ENCODE measurements at regions of chr19 and their contacts with region 1.

Region 1: DNA sequence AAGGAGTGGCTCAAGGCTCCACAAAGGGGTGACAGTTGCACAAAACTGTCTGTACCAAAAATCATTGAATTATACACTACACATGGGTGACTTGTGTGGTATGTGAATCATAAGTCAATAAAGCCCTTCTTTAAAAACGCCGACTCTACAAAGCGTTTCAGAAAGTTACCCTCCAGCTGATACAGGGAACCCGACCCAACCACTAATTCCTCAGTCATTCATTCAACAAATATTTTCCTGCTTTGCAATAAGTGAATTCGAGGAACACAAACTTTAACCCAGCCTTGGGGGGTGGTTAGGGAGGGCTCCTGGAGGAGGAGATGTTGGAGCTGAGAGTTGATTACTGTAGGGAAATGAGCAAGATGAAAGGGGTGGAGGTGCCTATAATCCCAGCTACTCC is 32.0 kb downstream of the LTBP4 start:
- DNase-seq: peak; percentile 85
- ATAC-seq: peak; percentile 68
- H3K4me3 ChIP-seq: no peak overlapping the region
- H3K27ac ChIP-seq: peak overlapping the region; percentile 89
- H3K4me1 ChIP-seq: peaks cover 14% of the 10 kb centered on the region
- H3K27me3 ChIP-seq: no peaks in the 10 kb centered on the region
- CTCF ChIP-seq: no peak
- POLR2A ChIP-seq: no peak
- RAD21 ChIP-seq: no peak

Region 2: GRCh38 chr19:40392872-40393845 is 240.0 kb before region 1 on chr19:
- CTCF ChIA-PET with region 1: no interaction called
- POLR2A ChIA-PET with region 1: no interaction called
- dilution Hi-C with region 1: no loop called
- in situ Hi-C with region 1: no loop called
- intact Hi-C with region 1: no loop called
- DNase-seq: no peak
- ATAC-seq: peak; percentile 48; the same call in 1 of the 2 replicates
- H3K4me3 ChIP-seq: no peak overlapping the region
- H3K27ac ChIP-seq: no peak overlapping the region
- H3K4me1 ChIP-seq: no peaks in the 10 kb centered on the region
- H3K27me3 ChIP-seq: no peaks in the 10 kb centered on the region
- CTCF ChIP-seq: peak; percentile 18; the same call in 1 of the 2 replicates
- POLR2A ChIP-seq: no peak
- RAD21 ChIP-seq: no peak

Region 3: DNA sequence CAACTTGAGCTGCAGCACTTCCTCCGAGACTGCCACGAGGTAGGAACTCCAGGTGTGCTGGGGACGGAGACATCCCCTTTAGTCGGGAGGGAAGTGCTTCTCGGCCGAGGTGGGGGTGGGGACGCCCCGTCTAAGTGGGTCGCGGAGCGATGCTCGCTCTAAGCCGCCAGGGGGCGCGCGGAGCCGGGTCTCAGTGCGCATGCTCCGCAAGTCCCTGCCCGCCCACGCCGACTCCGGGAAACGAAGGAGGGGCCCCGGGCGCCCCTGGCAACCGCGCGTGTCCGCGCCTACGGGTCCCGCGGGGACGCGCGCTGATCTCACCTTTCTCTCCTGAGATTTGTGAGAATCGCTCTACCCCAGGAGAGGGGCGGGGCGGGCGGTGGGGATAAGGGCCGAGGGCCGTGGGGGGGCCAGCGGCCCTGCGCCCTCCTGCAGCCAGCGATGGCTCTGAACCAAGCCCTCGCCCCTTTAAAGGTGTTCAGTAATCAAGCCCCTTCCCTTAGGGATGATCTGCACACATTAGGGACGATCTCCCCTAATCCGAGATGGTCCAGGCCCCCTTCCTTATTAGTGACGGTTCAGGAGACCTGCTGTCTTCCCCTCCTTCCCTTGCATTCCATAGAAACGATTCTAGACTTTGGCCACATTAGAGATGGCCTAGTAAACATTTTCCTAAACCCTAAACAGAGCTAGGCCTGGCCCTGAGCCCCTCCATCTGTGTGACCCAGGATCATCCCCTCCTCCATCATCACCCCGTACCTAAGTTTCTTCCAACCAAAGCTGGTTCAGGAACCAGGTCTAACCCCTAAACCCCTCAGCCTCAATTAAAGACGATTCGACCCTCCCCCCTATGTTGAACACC is 103.9 kb before region 1 on chr19:
- CTCF ChIA-PET with region 1: interaction called, 3 read pairs
- POLR2A ChIA-PET with region 1: interaction called, 3 read pairs
- dilution Hi-C with region 1: no loop called
- in situ Hi-C with region 1: no loop called
- intact Hi-C with region 1: loop called (anchors 1 kb)
- DNase-seq: peak; percentile 61
- ATAC-seq: peak; percentile 91
- H3K4me3 ChIP-seq: peak overlapping the region; percentile 37
- H3K27ac ChIP-seq: no peak overlapping the region
- H3K4me1 ChIP-seq: peaks cover 3% of the 10 kb centered on the region; the same call in 1 of the 2 replicates
- H3K27me3 ChIP-seq: peaks cover 18% of the 10 kb centered on the region
- CTCF ChIP-seq: peak; percentile 95
- POLR2A ChIP-seq: no peak
- RAD21 ChIP-seq: peak; percentile 59

Region 4: GRCh38 chr19:40603389-40604135 is 29.6 kb before region 1 on chr19:
- CTCF ChIA-PET with region 1: interaction called, 34 read pairs
- POLR2A ChIA-PET with region 1: interaction called, 3 read pairs
- dilution Hi-C with region 1: no loop called
- in situ Hi-C with region 1: no loop called
- intact Hi-C with region 1: loop called (anchors 1 kb)
- DNase-seq: peak; percentile 92
- ATAC-seq: peak; percentile 85
- H3K4me3 ChIP-seq: peak overlapping the region; percentile 9
- H3K27ac ChIP-seq: peak overlapping the region; percentile 96
- H3K4me1 ChIP-seq: peaks cover 20% of the 10 kb centered on the region
- H3K27me3 ChIP-seq: no peaks in the 10 kb centered on the region
- CTCF ChIP-seq: peak; percentile 21; the same call in 1 of the 2 replicates
- POLR2A ChIP-seq: no peak
- RAD21 ChIP-seq: no peak

Region 5: DNA sequence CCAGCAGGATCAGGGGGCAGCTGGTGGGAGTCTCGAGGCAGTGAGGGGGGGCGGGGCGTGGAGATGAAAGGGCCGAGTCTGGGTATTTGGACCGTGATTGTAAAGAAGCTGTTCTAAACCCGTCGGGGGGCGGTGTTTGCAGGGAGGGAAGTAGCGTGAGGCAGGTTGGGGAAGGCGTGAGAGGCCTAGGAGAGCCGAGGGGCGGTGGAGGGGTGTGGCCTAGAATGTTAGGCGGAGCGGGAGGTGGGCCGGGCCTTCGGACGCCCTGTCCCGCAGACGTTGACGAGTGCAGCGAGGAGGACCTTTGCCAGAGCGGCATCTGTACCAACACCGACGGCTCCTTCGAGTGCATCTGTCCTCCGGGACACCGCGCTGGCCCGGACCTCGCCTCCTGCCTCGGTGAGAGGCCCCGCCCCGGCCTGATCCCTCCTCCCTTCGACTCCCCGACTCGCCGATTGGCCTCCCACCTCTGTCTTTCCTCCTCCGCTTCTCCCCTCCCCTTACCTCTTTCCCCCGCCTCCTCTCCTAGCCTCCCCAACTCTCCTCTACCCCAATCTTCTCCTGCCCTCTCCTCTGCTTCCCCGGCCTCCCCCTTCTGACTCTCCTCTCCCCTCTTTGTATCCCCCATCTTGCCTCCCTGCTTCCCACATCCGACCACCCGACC is 19.4 kb before region 1 on chr19:
- CTCF ChIA-PET with region 1: interaction called, 11 read pairs
- POLR2A ChIA-PET with region 1: no interaction called
- dilution Hi-C with region 1: no loop called
- in situ Hi-C with region 1: no loop called
- intact Hi-C with region 1: loop called (anchors 1 kb)
- DNase-seq: peak; percentile 72
- ATAC-seq: peak; percentile 62
- H3K4me3 ChIP-seq: peak overlapping the region; percentile 64
- H3K27ac ChIP-seq: peak overlapping the region; percentile 96
- H3K4me1 ChIP-seq: peaks cover 12% of the 10 kb centered on the region; the same call in 1 of the 2 replicates
- H3K27me3 ChIP-seq: no peaks in the 10 kb centered on the region
- CTCF ChIP-seq: no peak
- POLR2A ChIP-seq: no peak
- RAD21 ChIP-seq: no peak

Region 6: DNA sequence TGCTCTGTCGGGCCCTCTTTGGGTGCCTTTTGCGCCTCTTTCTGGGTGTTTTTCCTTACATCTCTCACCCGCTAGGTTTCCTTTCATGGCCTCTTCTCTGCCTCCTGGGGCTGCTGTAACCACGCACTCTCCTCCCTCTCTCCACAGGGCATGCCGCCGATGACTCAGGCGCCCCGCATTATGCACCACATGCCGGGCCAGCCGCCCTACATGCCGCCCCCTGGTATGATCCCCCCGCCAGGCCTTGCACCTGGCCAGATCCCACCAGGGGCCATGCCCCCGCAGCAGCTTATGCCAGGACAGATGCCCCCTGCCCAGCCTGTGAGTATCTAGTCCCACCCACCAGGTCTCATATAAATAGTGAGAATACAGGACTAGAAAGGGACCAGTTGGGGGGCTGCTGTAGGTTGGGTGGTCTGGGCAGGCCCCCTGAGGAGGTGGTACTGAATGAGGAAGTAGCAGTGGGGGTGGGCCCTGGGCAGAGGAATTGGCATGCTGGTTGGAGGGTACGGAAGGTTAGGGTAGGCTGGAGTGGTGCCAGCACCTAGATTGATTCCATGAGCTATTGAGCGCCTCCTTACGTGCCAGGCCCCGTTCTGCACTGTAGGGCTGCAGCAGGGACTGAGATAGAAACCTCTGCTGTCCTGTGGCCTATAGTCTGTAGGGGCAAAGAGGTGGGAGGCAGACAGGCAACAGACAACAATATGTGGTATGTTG is 129.7 kb after region 1 on chr19:
- CTCF ChIA-PET with region 1: no interaction called
- POLR2A ChIA-PET with region 1: no interaction called
- dilution Hi-C with region 1: no loop called
- in situ Hi-C with region 1: no loop called
- intact Hi-C with region 1: no loop called
- DNase-seq: no peak
- ATAC-seq: no peak
- H3K4me3 ChIP-seq: no peak overlapping the region
- H3K27ac ChIP-seq: no peak overlapping the region
- H3K4me1 ChIP-seq: no peaks in the 10 kb centered on the region
- H3K27me3 ChIP-seq: no peaks in the 10 kb centered on the region
- CTCF ChIP-seq: no peak
- POLR2A ChIP-seq: no peak
- RAD21 ChIP-seq: no peak